Sciatic nerve (tissue), 2 donors: ENCODE measurements at regions of chr20 and their contacts with region 1.

Region 1: DNA sequence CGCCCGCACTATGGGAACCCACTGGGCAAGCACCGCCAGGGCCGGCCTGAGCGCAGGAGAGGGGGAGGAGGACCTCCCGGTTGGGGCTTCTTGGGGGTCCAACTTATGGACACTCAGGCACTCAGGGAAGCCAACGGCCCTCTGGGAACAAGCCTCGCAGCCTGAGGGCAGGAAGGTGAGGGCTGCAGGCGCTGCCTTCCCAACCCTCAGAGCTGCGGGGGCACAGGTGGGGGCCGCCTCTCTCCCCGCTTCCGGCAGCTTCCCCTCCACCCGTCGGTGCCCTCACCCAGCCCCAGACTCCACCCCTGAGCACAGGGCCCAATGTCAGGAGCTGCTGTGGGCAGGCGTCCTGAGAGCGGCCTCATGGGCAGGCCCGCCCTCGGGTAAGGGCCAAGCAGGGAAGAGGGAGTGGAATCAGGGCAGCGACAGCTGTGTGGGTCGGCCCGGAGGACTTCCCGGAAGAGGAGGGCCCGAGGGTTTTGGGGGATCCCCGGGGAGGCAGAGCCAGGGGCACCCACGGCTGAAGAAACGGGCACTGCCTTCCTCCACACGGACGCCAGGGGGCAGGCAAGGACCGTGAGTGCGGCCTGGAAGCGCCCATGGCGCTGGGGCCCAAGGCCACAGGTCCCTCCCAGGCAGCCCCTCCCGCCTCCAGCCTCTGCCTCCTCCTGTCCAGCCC is 488 bp upstream of the PTK6 start:
- DNase-seq: peak; percentile 89
- ATAC-seq: peak; percentile 85

Region 2: GRCh38 chr20:63864847-63865640 is 327.4 kb after region 1 on chr20 and contains the start of gene TPD52L2:
- intact Hi-C with region 1: loop called (anchors 10 kb)
- DNase-seq: peak; percentile 99
- ATAC-seq: peak; percentile 97
- total RNA-seq, gene TPD52L2: 69.1 TPM

Region 3: GRCh38 chr20:63979560-63980316 is 442.1 kb after region 1 on chr20 and contains the start of gene SAMD10:
- intact Hi-C with region 1: loop called (anchors 5 kb)
- DNase-seq: peak; percentile 80
- ATAC-seq: peak; percentile 23
- total RNA-seq, gene SAMD10: 2.9 TPM